H1 (cell line): ENCODE measurements at regions of chr1 and their contacts with region 1.

Region 1: GRCh38 chr1:34162852-34163766 is 1.9 kb downstream of the CSMD2 start:
- DNase-seq: peak; percentile 86 to 87
- H3K4me3 ChIP-seq: peak overlapping the region; percentile 80 to 90 (median 82)
- H3K27ac ChIP-seq: no peak overlapping the region
- H3K4me1 ChIP-seq: peaks cover 4 to 18% (median 10%) of the 10 kb centered on the region in 4 experiments
- H3K27me3 ChIP-seq: no peaks in the 10 kb centered on the region
- CTCF ChIP-seq: peak; percentile 65 to 84 (median 77)
- EP300 ChIP-seq: no peak
- POLR2A ChIP-seq: no peak
- RAD21 ChIP-seq: peak; percentile 81 to 86

Region 2: DNA sequence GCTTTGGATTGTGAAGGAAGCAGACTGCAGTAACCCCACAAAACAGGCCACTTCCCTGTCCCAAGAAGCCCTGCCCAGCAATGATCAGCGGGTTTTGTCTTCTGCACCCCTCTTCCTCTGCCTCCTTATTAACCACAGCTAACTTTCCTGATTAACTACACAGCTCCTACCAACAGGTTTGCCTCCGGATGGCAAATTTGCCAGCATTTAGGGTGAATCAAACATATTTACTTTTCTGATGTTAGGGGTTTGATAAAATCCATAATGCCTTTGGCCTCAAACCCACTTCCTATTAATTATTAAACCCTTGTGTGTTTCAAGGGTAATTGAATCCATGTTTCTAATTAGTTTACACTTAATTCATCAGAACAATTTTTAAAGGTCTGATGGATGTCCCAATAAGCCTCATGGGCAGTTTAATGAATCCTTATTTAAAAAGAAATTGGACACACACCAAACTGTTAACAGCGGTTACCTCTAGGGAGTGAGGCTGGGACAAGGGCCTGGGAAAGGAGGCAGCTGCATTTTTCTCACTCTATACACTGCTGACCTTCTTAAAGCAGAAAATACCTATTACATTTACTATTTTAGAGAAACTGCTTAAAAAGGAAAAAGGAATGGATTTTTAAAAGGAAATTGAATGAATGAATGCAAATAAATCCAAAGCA is 89.9 kb before region 1 on chr1:
- CTCF ChIA-PET with region 1: no interaction called
- POLR2A ChIA-PET with region 1: no interaction called
- DNase-seq: no peak
- H3K4me3 ChIP-seq: no peak overlapping the region
- H3K27ac ChIP-seq: no peak overlapping the region
- H3K4me1 ChIP-seq: peaks cover 0 to 22% (median under 1%) of the 10 kb centered on the region in 4 experiments; a peak in 3 of 7 replicates
- H3K27me3 ChIP-seq: no peaks in the 10 kb centered on the region
- CTCF ChIP-seq: no peak
- EP300 ChIP-seq: no peak
- POLR2A ChIP-seq: no peak
- RAD21 ChIP-seq: no peak

Region 3: GRCh38 chr1:34149501-34149900 is 13.6 kb before region 1 on chr1:
- CTCF ChIA-PET with region 1: interaction called, 26 read pairs
- POLR2A ChIA-PET with region 1: interaction called, 19 read pairs
- DNase-seq: no peak
- H3K4me3 ChIP-seq: no peak overlapping the region
- H3K27ac ChIP-seq: no peak overlapping the region
- H3K4me1 ChIP-seq: peaks cover 9 to 16% (median 15%) of the 10 kb centered on the region in 4 experiments
- H3K27me3 ChIP-seq: no peaks in the 10 kb centered on the region
- CTCF ChIP-seq: no peak
- EP300 ChIP-seq: no peak
- POLR2A ChIP-seq: no peak
- RAD21 ChIP-seq: no peak

Region 4: GRCh38 chr1:34176830-34177603 is 13.9 kb after region 1 on chr1 and contains the start of gene C1orf94:
- CTCF ChIA-PET with region 1: interaction called, 13 read pairs
- POLR2A ChIA-PET with region 1: interaction called, 82 read pairs
- DNase-seq: peak in 1 of 2 experiments; percentile 68
- H3K4me3 ChIP-seq: peak within 1 kb of the TSS; percentile 29 to 58 (median 42)
- H3K27ac ChIP-seq: no peak within 1 kb of the TSS
- H3K4me1 ChIP-seq: peaks cover 9 to 27% (median 12%) of the 10 kb centered on the region in 4 experiments
- H3K27me3 ChIP-seq: peaks cover 0 to 16% (median 7%) of the 10 kb centered on the region in 4 experiments; a peak in 4 of 7 replicates
- CTCF ChIP-seq: peak in 2 of 3 experiments; percentile 48 to 49; a peak in 3 of 4 replicates
- EP300 ChIP-seq: no peak
- POLR2A ChIP-seq: no peak
- RAD21 ChIP-seq: peak; percentile 23 to 30; a peak in 2 of 4 replicates
- total RNA-seq, gene C1orf94: 4.8 and 5.8 TPM in 2 replicates

Region 5: GRCh38 chr1:34188418-34188817 is 25.3 kb after region 1 on chr1:
- CTCF ChIA-PET with region 1: interaction called, 10 read pairs
- POLR2A ChIA-PET with region 1: interaction called, 7 read pairs
- DNase-seq: peak in 1 of 2 experiments; percentile 61
- H3K4me3 ChIP-seq: peak overlapping the region in 1 of 4 experiments; percentile 27; a peak in 1 of 8 replicates
- H3K27ac ChIP-seq: no peak overlapping the region
- H3K4me1 ChIP-seq: peaks cover 11 to 21% (median 18%) of the 10 kb centered on the region in 4 experiments
- H3K27me3 ChIP-seq: peaks cover 0 to 4% (median 2%) of the 10 kb centered on the region in 4 experiments; a peak in 3 of 7 replicates
- CTCF ChIP-seq: no peak
- EP300 ChIP-seq: 0 out of 3 replicates have a peak, but pooled peaks of 1 of the 2 experiments have one; percentile 76
- POLR2A ChIP-seq: no peak
- RAD21 ChIP-seq: peak in 1 of 2 experiments; percentile 25; a peak in 1 of 4 replicates

Region 6: GRCh38 chr1:34538481-34538880 is 375.4 kb after region 1 on chr1:
- CTCF ChIA-PET with region 1: no interaction called
- POLR2A ChIA-PET with region 1: no interaction called
- DNase-seq: no peak
- H3K4me3 ChIP-seq: no peak overlapping the region
- H3K27ac ChIP-seq: no peak overlapping the region
- H3K4me1 ChIP-seq: no peaks in the 10 kb centered on the region
- H3K27me3 ChIP-seq: no peaks in the 10 kb centered on the region
- CTCF ChIP-seq: no peak
- EP300 ChIP-seq: no peak
- POLR2A ChIP-seq: no peak
- RAD21 ChIP-seq: no peak